ENCODE measurements at regions of chr4 and their contacts with region 1.

Region 1: GRCh38 chr4:82866706-82867385 is 24.1 kb downstream of the SEC31A start:
- DNase-seq: no peak
- H3K4me3 ChIP-seq: no peak overlapping the region
- H3K27ac ChIP-seq: peak overlapping the region; percentile 12 to 92; a peak in 3 of 4 replicates
- H3K4me1 ChIP-seq: peaks cover 0 to 8% of the 10 kb centered on the region in 2 experiments; a peak in 1 of 4 replicates
- H3K27me3 ChIP-seq: no peaks in the 10 kb centered on the region
- CTCF ChIP-seq: no peak
- EP300 ChIP-seq: no peak
- RAD21 ChIP-seq: no peak

Region 2: DNA sequence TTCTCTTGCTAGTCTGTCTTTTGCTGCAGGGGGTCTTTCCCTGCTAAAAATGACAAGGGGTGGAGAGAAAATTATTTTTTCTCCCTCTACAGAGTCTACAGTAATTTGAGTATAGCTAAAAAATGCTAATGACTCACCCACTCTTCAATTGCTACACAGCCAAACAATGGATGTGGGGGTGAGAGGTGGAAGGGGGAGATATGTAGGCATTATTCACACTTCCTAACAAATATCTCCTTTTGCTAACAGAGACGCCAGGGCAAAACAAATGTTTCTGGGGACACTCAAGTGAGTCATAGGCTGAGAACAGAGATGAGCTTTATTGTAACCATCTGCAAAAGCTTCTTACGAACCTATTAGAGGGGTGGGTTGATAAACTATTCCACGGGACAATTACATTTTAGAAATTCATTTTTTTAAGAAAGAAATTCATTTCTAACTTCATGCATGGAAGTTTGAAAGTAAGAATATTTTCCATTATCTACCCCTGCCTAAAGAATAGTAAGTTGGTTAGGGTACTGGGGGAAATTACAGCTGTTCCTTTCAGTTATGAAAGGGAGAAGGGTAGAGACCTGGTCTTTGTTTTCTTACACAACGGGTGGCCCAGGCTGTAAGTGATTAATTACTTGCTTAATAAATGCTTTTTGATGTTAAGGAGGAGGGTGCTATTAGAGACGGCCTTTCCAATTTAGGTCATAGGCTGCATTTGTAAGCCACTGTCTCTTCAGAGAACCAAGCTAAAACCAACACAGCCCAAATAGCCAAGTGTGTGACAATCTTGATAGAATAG is 81.0 kb before region 1 on chr4:
- CTCF ChIA-PET with region 1: no interaction called
- POLR2A ChIA-PET with region 1: no interaction called
- DNase-seq: no peak
- H3K4me3 ChIP-seq: peak overlapping the region; percentile 38 to 48; a peak in 3 of 4 replicates
- H3K27ac ChIP-seq: peak overlapping the region; percentile 85 to 97
- H3K4me1 ChIP-seq: peaks cover 22 to 28% of the 10 kb centered on the region in 2 experiments
- H3K27me3 ChIP-seq: no peaks in the 10 kb centered on the region
- CTCF ChIP-seq: no peak
- EP300 ChIP-seq: peak in 1 of 2 experiments; percentile 83; a peak in 2 of 4 replicates
- RAD21 ChIP-seq: no peak

Region 3: DNA sequence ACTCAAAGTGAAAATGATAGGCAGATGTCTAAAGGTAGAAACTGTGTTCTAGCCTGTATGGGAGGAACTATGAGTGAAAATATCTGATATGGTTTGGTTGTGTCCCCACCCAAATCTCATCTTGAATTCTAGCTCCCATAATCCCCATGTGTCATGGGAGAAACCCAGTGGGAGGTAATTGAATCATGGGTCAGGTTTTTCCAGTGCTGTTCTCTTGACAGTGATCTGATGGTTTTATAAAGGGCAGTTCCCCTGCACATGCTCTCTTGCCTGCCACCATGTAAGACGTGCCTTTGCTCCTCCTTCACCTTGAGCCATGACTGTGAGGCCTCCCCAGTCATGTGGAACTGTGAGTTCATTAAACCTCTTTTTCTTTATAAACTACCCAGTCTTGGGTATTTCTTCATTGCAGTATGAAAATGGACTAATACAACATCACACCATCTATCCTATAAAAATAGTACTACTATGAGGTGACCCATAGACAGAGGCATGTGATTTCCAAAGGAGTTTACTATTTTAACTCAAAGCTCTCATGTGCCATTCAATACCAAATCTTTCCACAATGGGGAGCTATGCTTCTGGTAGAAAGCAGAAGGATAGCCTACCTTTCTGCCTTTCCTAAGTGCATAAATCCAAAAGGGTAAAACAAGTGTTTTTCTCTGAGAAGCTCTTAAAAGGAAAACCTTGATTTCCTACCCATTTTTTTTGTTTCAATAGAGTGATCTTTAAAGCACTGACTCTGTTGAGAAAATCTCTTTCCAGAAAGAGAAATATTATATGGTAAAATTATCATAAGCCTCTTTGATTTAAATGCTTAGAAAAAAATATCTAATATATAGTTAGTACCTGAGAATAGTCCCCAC is 14.7 kb before region 1 on chr4:
- CTCF ChIA-PET with region 1: interaction called, 10 read pairs
- POLR2A ChIA-PET with region 1: no interaction called
- DNase-seq: peak; percentile 7
- H3K4me3 ChIP-seq: no peak overlapping the region
- H3K27ac ChIP-seq: 0 out of 4 replicates have a peak overlapping the region, but pooled peaks of 1 of the 2 experiments have one; percentile 3
- H3K4me1 ChIP-seq: no peaks in the 10 kb centered on the region
- H3K27me3 ChIP-seq: no peaks in the 10 kb centered on the region
- CTCF ChIP-seq: peak; percentile 65
- EP300 ChIP-seq: no peak
- RAD21 ChIP-seq: peak; percentile 61

Region 4: GRCh38 chr4:82984459-82984858 is 117.6 kb after region 1 on chr4:
- CTCF ChIA-PET with region 1: no interaction called
- POLR2A ChIA-PET with region 1: no interaction called
- DNase-seq: no peak
- H3K4me3 ChIP-seq: no peak overlapping the region
- H3K27ac ChIP-seq: peak overlapping the region; percentile 53 to 55; a peak in 3 of 4 replicates
- H3K4me1 ChIP-seq: peaks cover 3 to 6% of the 10 kb centered on the region in 2 experiments; a peak in 2 of 4 replicates
- H3K27me3 ChIP-seq: no peaks in the 10 kb centered on the region
- CTCF ChIP-seq: no peak
- EP300 ChIP-seq: no peak
- RAD21 ChIP-seq: no peak

Region 5: GRCh38 chr4:83034630-83035494 is 168.0 kb after region 1 on chr4 and contains the start of gene COPS4:
- CTCF ChIA-PET with region 1: no interaction called
- POLR2A ChIA-PET with region 1: no interaction called
- DNase-seq: peak; percentile 91
- H3K4me3 ChIP-seq: peak within 1 kb of the TSS; percentile 84 to 89
- H3K27ac ChIP-seq: peak within 1 kb of the TSS; percentile 92 to 96
- H3K4me1 ChIP-seq: peaks cover 0 to 12% of the 10 kb centered on the region in 2 experiments; a peak in 2 of 4 replicates
- H3K27me3 ChIP-seq: no peaks in the 10 kb centered on the region
- CTCF ChIP-seq: no peak
- EP300 ChIP-seq: peak in 1 of 2 experiments; percentile 18; a peak in 1 of 4 replicates
- RAD21 ChIP-seq: no peak
- polyA plus RNA-seq, gene COPS4: 32.2 and 33.9 TPM in 2 replicates

Measured in SK-N-SH (cell line).